ENCODE measurements at regions of chr3 and their contacts with region 1.

Region 1: GRCh38 chr3:138118612-138119422 is 3.4 kb upstream of the DZIP1L start:
- DNase-seq: peak; percentile 68
- H3K4me3 ChIP-seq: no peak overlapping the region
- H3K27ac ChIP-seq: no peak overlapping the region
- H3K4me1 ChIP-seq: no peaks in the 10 kb centered on the region
- H3K27me3 ChIP-seq: no peaks in the 10 kb centered on the region
- CTCF ChIP-seq: peak; percentile 50 to 78 (median 75)
- POLR2A ChIP-seq: no peak

Region 2: GRCh38 chr3:137958635-137959034 is 160.2 kb before region 1 on chr3:
- intact Hi-C with region 1: no loop called
- DNase-seq: no peak
- H3K4me3 ChIP-seq: no peak overlapping the region
- H3K27ac ChIP-seq: no peak overlapping the region
- H3K4me1 ChIP-seq: no peaks in the 10 kb centered on the region
- H3K27me3 ChIP-seq: no peaks in the 10 kb centered on the region
- CTCF ChIP-seq: no peak
- POLR2A ChIP-seq: no peak

Region 3: GRCh38 chr3:138068579-138069174 is 50.1 kb before region 1 on chr3:
- intact Hi-C with region 1: loop called (anchors 2 kb)
- DNase-seq: peak; percentile 69
- H3K4me3 ChIP-seq: no peak overlapping the region
- H3K27ac ChIP-seq: no peak overlapping the region
- H3K4me1 ChIP-seq: no peaks in the 10 kb centered on the region
- H3K27me3 ChIP-seq: no peaks in the 10 kb centered on the region
- CTCF ChIP-seq: peak; percentile 87 to 96 (median 93)
- POLR2A ChIP-seq: no peak

Region 4: DNA sequence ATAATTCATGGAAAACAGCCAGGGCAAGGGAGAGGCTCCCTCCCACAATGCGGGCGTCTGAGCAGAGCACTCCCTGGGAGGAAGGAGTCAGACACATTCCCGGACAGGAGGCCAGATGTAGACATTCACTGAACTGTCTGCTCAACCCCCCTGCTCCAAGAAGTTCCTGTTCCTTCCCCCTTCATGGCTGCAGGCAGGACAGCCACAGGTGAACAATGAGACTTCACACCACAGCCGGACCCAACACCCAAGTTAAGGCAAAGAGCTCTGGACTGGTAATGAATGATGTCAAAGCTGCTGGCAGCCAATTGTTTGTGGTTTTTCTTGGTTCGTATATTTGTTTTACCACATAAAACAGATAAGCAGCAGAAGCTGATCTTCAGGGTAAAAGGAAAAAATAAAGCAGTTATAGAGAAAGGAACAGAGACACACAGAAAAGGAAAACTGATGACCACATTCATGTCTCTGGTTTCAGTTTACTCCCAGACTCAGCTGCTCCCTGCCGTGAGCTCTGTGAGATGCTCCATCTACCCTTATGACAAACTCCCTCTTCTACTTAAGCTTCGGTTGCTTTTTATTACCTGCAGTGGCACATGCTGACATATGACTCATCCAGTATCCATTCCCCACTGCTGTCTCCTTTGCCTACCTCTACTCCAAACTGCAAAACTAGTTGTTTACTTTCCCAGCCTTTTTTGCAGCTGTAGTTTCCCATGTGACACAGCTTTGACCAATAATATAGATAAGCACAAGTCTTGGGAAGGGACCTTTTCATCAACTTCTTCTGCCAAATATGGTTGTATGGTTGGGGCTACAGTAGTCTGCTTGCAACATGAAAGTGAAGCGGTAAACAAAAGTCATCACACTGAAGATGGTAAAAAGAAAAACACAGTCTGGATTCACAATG is 36.5 kb before region 1 on chr3:
- intact Hi-C with region 1: loop called (anchors 5 kb)
- DNase-seq: peak; percentile 16
- H3K4me3 ChIP-seq: no peak overlapping the region
- H3K27ac ChIP-seq: peak overlapping the region in 1 of 2 donors; percentile 54
- H3K4me1 ChIP-seq: no peaks in the 10 kb centered on the region
- H3K27me3 ChIP-seq: no peaks in the 10 kb centered on the region
- CTCF ChIP-seq: no peak
- POLR2A ChIP-seq: no peak

Region 5: DNA sequence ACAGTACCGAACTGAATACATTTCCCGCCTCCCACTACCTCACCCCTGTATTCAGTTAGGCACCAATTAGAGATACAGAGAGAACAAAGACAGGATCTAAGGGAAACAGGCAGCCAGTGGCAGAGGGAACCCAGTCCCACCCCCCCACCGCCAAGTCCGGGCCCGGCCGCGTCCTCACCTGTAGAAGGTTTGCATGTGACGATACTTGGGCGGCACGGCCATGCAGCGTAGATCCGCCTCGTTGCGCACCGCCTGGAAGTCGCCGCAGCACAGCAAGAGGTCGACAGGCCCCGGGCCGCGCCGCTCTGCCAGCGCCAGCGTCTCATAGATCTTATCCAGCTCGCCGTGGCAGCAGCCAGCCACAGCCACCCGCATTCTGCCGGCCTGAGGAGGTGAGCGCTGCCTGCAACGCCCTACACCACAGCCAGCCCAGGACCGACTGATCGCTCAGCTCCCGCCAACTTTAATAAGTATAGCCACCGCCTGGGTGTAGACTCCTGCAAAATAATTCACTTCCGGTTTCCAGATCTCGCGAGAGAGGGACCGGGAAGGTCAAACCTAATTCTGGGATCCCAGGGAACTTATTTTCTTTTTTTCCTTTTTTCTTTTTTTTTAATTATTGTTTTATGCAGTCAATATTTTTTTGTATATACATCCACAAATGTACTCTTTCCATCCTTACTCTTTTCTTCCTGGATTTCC is 55.8 kb after region 1 on chr3 and contains the start of gene DBR1:
- intact Hi-C with region 1: no loop called
- DNase-seq: peak; percentile 83
- H3K4me3 ChIP-seq: peak within 1 kb of the TSS; percentile 62 to 67
- H3K27ac ChIP-seq: peak within 1 kb of the TSS; percentile 73
- H3K4me1 ChIP-seq: no peaks in the 10 kb centered on the region
- H3K27me3 ChIP-seq: no peaks in the 10 kb centered on the region
- CTCF ChIP-seq: peak in 2 of 4 experiments; percentile 14 to 15
- POLR2A ChIP-seq: peak; percentile 76
- total RNA-seq, gene DBR1: 9.1 to 15.8 TPM

Region 6: DNA sequence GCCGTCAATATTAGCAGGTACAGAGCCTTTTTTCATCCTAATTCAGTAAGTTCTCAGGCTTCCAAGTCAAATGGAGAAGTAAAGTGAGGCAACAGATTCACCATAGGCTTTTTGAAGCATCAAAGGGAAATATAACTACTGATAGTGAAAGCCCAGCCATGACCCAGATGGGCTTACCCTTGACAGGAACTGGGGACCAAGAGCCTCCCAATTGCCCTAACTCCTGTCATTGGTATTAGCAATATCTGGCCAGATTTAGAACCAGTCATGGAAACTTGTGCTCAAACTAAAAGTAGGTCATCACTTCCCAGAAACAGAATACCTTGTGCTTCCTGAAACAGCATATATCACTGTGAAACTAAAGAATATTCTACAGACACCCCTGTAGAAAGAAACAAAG is 177.8 kb after region 1 on chr3:
- intact Hi-C with region 1: no loop called
- DNase-seq: no peak
- H3K4me3 ChIP-seq: no peak overlapping the region
- H3K27ac ChIP-seq: no peak overlapping the region
- H3K4me1 ChIP-seq: no peaks in the 10 kb centered on the region
- H3K27me3 ChIP-seq: no peaks in the 10 kb centered on the region
- CTCF ChIP-seq: no peak
- POLR2A ChIP-seq: no peak